ENCODE measurements at regions of chr7 and their contacts with region 1.

Region 1: DNA sequence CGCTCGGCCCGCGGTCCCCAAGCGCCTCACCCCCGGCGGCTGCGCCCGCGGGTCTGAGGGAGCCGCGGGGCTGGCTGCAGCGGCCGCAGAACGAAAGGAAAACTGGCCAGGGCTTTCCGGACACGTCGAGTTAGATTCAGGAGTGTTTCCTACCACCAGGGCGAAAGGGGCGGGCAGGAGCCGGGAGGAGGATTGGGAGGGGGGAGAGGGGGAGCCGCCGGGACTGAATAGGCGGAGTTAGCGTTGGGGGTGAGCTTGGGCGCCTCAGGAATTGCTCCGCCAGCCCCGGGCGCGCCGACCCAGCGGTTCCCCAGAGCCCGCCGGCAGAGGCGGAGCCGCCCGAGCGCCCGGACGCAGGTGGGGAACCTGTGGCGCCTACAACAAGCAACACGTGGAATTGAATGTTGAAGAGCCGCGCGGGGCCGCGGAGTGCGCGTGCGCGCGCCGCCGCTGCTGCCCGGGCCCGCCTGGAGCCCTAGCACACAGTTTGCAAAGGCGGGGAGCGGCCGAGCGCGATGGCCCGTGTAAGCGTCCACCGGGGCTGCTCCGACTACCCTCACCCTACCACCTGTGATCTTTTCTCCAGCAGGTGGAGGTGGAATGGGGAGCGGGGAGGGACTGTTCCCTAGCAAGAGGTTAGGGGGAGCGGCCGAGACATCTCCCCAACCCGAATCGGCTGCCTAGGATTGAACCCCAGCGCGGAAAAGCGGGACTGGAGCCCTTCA is at the start of gene CADPS2:
- DNase-seq: peak; percentile 87
- H3K4me3 ChIP-seq: peak within 1 kb of the TSS; percentile 77 to 82
- H3K27ac ChIP-seq: peak within 1 kb of the TSS; percentile 92 to 95
- H3K4me1 ChIP-seq: no peaks in the 10 kb centered on the region
- H3K27me3 ChIP-seq: no peaks in the 10 kb centered on the region
- CTCF ChIP-seq: peak in 3 of 4 experiments; percentile 10 to 70 (median 49)
- POLR2A ChIP-seq: peak; percentile 70
- total RNA-seq, gene CADPS2: 22.2 to 50.4 TPM

Region 2: GRCh38 chr7:122689346-122690109 is 197.0 kb before region 1 on chr7:
- intact Hi-C with region 1: loop called (anchors 10 kb)
- DNase-seq: no peak
- H3K4me3 ChIP-seq: no peak overlapping the region
- H3K27ac ChIP-seq: no peak overlapping the region
- H3K4me1 ChIP-seq: no peaks in the 10 kb centered on the region
- H3K27me3 ChIP-seq: no peaks in the 10 kb centered on the region
- CTCF ChIP-seq: no peak
- POLR2A ChIP-seq: no peak

Region 3: GRCh38 chr7:123154231-123154860 is 267.8 kb after region 1 on chr7:
- intact Hi-C with region 1: loop called (anchors 10 kb)
- DNase-seq: peak; percentile 75
- H3K4me3 ChIP-seq: no peak overlapping the region
- H3K27ac ChIP-seq: no peak overlapping the region
- H3K4me1 ChIP-seq: no peaks in the 10 kb centered on the region
- H3K27me3 ChIP-seq: no peaks in the 10 kb centered on the region
- CTCF ChIP-seq: peak; percentile 41 to 92 (median 78)
- POLR2A ChIP-seq: no peak

Region 4: DNA sequence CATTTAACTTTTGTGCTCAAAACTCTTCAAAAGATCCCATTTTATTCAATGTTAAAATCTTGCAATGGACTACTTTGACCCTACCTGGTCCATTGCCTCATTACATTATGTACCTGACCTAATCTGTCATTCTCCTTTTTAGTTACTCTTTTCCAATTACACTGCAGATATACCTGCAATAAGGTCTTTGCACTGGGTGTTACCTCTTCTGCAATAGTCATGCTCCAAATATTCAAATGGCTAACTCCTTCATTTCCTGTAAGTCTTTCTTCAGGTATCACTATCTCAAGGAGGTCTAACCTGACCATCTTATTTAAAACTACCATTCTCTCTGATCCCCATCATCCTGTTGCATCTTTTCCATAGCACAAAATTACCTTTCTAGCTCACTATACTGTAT is 290.9 kb after region 1 on chr7:
- intact Hi-C with region 1: no loop called
- DNase-seq: no peak
- H3K4me3 ChIP-seq: no peak overlapping the region
- H3K27ac ChIP-seq: no peak overlapping the region
- H3K4me1 ChIP-seq: no peaks in the 10 kb centered on the region
- H3K27me3 ChIP-seq: no peaks in the 10 kb centered on the region
- CTCF ChIP-seq: no peak
- POLR2A ChIP-seq: no peak